PC-3 (cell line): ENCODE measurements at regions of chr15 and their contacts with region 1.

Region 1: DNA sequence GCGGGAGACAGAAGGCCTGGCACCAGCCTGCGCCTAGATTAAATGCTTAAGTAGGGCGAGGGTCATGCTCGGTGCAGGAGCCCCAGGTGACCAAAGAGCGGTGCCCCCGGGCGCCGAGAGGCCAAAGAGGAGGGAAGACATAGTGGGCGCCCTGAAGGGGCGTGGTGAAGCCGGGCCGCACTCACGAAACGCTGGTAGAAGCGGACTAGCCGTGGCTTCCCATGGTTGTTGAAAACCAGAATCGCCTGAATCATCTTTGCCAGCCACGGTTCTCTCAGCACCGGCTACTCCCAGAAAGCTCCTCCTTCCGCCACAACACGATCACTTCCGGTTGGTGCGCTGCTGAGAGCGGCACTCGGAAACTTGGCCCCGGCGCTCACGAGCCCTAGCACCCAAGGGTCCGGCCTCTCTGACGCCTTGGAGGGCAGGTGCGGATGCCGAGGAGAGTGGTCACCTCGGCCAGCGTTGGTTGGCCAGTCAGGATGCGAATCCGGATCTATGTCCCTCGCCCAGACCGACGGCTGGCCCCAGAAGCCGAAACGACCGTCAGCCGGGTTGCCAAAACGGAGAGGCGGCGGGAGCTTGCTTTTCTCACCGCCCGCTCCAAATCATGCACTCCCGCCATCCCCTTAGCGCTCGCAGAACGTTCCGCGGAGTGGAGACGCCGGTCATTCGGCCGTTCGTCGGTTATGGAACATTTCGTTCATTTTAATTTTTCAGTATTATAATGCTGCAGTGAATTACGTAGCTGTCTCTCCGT is at the start of gene AP3S2:
- DNase-seq: peak; percentile 96
- ATAC-seq: peak; percentile 88
- H3K4me3 ChIP-seq: peak within 1 kb of the TSS; percentile 81
- H3K27ac ChIP-seq: peak within 1 kb of the TSS; percentile 96
- H3K4me1 ChIP-seq: peaks cover 14% of the 10 kb centered on the region
- H3K27me3 ChIP-seq: no peaks in the 10 kb centered on the region
- CTCF ChIP-seq: no peak
- total RNA-seq, gene AP3S2: 18.8 and 19.4 TPM in 2 replicates

Region 2: GRCh38 chr15:89874926-89875564 is 18.8 kb before region 1 on chr15:
- CTCF ChIA-PET with region 1: interaction called, 11 read pairs
- POLR2A ChIA-PET with region 1: no interaction called
- intact Hi-C with region 1: no loop called
- DNase-seq: peak; percentile 82
- ATAC-seq: peak; percentile 93
- H3K4me3 ChIP-seq: no peak overlapping the region
- H3K27ac ChIP-seq: peak overlapping the region; percentile 52
- H3K4me1 ChIP-seq: peaks cover 8% of the 10 kb centered on the region; the same call in 1 of the 2 replicates
- H3K27me3 ChIP-seq: no peaks in the 10 kb centered on the region
- CTCF ChIP-seq: peak; percentile 95

Region 3: GRCh38 chr15:89978914-89979313 is 85.0 kb after region 1 on chr15:
- CTCF ChIA-PET with region 1: interaction called, 10 read pairs
- POLR2A ChIA-PET with region 1: no interaction called
- intact Hi-C with region 1: no loop called
- DNase-seq: no peak
- ATAC-seq: no peak
- H3K4me3 ChIP-seq: no peak overlapping the region
- H3K27ac ChIP-seq: no peak overlapping the region
- H3K4me1 ChIP-seq: no peaks in the 10 kb centered on the region
- H3K27me3 ChIP-seq: no peaks in the 10 kb centered on the region
- CTCF ChIP-seq: no peak

Region 4: DNA sequence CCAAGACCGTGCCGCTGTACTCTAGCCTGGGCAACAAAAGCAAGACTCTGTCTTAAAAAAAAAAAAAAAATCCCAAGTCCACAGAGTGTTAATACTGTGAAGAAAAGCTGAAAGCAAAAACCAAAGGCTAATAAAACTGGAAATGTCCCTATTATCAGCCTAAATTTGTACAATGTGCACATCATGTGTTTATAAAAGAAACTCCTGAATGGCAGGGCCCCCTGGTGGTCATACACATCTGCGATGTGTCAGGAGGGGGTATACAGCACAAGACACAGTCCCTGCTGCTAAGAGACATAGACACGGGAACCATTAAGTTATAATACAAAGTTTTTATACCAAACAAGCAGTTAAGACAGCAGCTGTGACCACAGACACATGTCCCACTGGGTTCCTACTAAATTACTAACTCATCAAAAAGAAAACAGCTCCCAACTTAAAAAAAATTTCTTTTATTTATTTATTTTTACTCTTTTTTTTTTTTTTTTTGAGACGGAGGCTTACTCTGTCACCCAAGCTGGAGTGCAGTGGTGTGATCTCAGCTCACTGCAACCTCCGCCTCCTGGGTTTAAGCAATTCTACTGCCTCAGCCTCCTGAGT is 177.4 kb after region 1 on chr15:
- CTCF ChIA-PET with region 1: no interaction called
- POLR2A ChIA-PET with region 1: no interaction called
- intact Hi-C with region 1: loop called (anchors 1 kb)
- DNase-seq: peak; percentile 84
- ATAC-seq: peak; percentile 89
- H3K4me3 ChIP-seq: no peak overlapping the region
- H3K27ac ChIP-seq: no peak overlapping the region
- H3K4me1 ChIP-seq: peaks cover 13% of the 10 kb centered on the region
- H3K27me3 ChIP-seq: no peaks in the 10 kb centered on the region
- CTCF ChIP-seq: peak; percentile 82

Region 5: GRCh38 chr15:90286678-90287077 is 392.8 kb after region 1 on chr15:
- CTCF ChIA-PET with region 1: interaction called, 12 read pairs
- POLR2A ChIA-PET with region 1: no interaction called
- intact Hi-C with region 1: no loop called
- DNase-seq: peak; percentile 58
- ATAC-seq: peak; percentile 69
- H3K4me3 ChIP-seq: no peak overlapping the region
- H3K27ac ChIP-seq: no peak overlapping the region
- H3K4me1 ChIP-seq: no peaks in the 10 kb centered on the region
- H3K27me3 ChIP-seq: no peaks in the 10 kb centered on the region
- CTCF ChIP-seq: peak; percentile 80